ENCODE measurements at regions of chr9 and their contacts with region 1.

Region 1: DNA sequence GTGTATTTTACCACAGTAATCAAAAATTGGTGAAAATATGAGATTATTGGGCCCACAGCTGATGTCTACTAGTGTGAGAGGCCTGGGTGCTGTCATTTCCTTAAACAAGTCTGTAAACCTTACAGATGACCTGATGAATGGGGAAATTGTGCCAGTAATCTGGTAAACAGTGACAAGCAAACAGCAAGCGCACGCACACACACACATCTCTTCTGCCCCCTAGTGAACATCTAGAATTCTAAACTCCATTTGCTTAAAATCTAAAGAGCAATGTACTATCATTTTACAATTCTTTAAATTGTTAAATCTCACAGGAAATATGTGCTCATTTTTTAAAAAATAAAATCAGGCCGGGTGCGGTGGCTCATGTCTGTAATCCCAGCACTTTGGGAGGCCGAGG is 7.5 kb upstream of the RAPGEF1 start:
- DNase-seq: no peak
- H3K4me3 Mint-ChIP-seq: no peak overlapping the region
- H3K27ac Mint-ChIP-seq: no peak overlapping the region
- H3K4me1 Mint-ChIP-seq: peaks cover 34% of the 10 kb centered on the region
- H3K27me3 Mint-ChIP-seq: peaks cover under 1% of the 10 kb centered on the region

Region 2: DNA sequence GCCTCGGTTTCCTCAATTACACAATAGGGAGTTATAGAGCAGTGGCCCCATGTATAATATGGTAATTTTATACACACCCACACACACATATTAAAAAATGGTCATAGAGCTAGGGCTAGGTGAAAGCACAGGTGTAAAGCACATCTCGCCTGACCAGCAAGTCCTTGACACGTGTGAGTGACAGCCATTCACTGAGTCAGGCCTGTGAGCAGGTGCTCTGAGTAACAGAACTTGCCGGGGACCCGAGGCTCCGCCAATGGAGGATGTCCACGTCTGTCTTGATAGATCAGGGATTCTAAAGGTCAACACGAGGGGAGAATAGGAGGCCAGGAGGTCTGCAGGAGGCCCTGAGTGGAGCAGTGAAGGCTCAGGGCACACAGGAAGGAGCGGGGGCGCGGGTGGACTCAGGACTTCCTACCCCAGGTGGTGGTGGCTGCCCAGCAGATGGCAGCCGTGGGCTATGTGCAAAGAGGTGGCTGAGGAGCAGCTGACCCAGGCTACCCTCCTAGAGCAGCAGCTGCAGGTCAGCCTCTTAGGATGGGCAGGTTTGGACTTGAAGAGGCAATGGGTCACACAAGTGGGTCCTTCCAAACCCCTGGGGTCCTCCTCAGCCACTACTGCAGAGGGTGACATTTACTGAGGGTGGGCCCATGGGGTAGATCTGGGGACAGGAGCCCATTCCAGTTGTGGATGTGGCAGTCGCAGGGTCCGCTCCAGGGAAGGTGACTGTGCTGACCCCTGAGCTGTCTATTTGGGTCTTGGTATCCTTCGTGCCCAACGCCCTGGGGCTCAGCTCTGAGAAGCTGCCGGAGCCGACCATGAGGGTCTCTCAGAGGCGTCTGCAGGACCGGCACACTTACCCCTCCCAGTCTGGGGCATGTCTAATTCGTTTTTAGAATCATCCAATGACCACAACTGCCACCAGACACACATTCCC is 156.2 kb before region 1 on chr9:
- intact Hi-C with region 1: loop called (anchors 2 kb)
- DNase-seq: peak; percentile 66
- H3K4me3 Mint-ChIP-seq: no peak overlapping the region
- H3K27ac Mint-ChIP-seq: peak overlapping the region; percentile 78
- H3K4me1 Mint-ChIP-seq: peaks cover 32% of the 10 kb centered on the region
- H3K27me3 Mint-ChIP-seq: no peaks in the 10 kb centered on the region